ENCODE measurements at regions of chr21 and their contacts with region 1.

Region 1: DNA sequence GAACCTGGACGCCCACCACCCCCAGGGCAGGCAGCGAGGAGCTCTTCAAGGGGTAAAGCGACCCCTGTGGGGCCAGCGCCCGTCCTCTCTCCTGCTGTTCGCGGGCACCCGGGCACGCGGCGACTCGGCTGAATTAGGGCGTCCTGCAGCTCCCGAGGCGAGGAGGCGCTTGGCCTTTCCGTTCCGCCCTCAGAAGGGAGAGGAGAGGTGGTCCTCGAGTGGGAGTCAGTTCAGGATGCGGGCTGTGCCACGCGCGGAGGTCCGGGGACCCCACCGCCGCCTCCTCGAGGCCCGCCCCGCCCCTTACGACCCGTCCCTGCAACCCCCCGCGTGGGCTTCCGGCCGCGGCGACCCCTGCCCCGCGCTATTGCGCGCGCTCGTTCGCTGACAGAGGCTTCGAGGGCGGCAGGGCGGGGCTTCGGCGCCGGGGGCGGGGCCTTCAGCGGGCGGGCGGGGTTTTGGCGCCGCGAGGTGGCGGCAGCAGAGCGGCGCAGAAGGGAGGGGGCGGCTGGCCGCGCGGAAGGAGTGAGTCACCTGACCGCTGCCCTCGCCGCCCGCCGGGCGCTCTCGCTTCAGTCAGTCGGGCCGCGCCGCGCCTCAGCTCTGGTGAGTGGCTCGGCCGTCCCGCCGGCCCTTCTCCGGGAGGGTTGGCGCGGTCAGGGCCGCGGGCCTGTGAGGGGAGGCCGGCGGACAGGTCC is at the start of gene BACH1:
- DNase-seq: peak; percentile 88
- H3K4me3 Mint-ChIP-seq: peak within 1 kb of the TSS; percentile 81
- H3K27ac Mint-ChIP-seq: peak within 1 kb of the TSS; percentile 61
- H3K4me1 Mint-ChIP-seq: peaks cover 38% of the 10 kb centered on the region
- H3K27me3 Mint-ChIP-seq: no peaks in the 10 kb centered on the region
- CTCF ChIP-seq: peak; percentile 35
- total RNA-seq, gene BACH1: 69.3 and 76.6 TPM in 2 replicates

Region 2: DNA sequence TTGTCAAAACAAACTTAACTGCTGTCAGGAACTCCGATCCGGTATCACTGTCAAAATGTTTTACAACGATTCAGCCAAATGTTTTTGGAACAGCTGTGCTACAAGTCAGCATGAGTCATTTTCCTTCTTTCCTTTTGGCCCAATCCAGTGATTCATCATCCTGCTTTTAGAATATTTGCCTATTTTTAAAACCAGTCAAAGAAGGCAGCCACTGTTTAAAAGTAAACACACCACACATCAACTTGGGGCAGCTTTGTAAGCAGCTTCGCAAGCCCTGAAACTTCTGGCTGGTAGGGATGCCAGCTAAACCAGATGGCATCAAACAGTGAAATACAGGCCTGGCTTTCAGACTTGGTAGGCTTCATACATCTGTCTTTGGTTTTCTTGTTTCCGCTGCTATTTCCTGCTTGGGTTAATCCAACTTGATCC is 153.1 kb before region 1 on chr21:
- CTCF ChIA-PET with region 1: interaction called, 5 read pairs
- POLR2A ChIA-PET with region 1: interaction called, 61 read pairs
- intact Hi-C with region 1: no loop called
- DNase-seq: peak; percentile 91
- H3K4me3 Mint-ChIP-seq: peak overlapping the region; percentile 39
- H3K27ac Mint-ChIP-seq: peak overlapping the region; percentile 92
- H3K4me1 Mint-ChIP-seq: peaks cover 23% of the 10 kb centered on the region
- H3K27me3 Mint-ChIP-seq: no peaks in the 10 kb centered on the region
- CTCF ChIP-seq: no peak

Region 3: DNA sequence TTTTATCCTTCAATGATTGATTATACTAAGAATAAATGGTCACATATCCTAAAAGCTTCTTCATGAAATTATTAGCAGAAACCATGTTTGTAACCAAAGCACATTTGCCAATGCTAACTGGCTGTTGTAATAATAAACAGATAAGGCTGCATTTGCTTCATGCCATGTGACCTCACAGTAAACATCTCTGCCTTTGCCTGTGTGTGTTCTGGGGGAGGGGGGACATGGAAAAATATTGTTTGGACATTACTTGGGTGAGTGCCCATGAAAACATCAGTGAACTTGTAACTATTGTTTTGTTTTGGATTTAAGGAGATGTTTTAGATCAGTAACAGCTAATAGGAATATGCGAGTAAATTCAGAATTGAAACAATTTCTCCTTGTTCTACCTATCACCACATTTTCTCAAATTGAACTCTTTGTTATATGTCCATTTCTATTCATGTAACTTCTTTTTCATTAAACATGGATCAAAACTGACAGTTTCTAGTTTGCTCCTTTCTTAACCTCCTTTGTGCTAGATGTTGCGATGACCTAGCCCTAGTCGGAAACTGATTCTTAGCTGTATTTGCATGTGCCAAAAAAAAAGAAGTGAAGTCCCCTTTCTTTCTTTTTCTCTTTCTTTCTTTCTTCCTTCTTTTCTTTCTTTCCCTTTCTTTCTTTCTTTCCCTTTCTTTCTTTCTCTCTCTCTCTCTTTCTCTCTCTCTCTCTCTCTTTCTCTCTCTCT is 122.9 kb before region 1 on chr21:
- CTCF ChIA-PET with region 1: interaction called, 29 read pairs
- POLR2A ChIA-PET with region 1: interaction called, 58 read pairs
- intact Hi-C with region 1: no loop called
- DNase-seq: peak; percentile 65
- H3K4me3 Mint-ChIP-seq: no peak overlapping the region
- H3K27ac Mint-ChIP-seq: peak overlapping the region; percentile 84
- H3K4me1 Mint-ChIP-seq: peaks cover 13% of the 10 kb centered on the region
- H3K27me3 Mint-ChIP-seq: no peaks in the 10 kb centered on the region
- CTCF ChIP-seq: no peak

Region 4: DNA sequence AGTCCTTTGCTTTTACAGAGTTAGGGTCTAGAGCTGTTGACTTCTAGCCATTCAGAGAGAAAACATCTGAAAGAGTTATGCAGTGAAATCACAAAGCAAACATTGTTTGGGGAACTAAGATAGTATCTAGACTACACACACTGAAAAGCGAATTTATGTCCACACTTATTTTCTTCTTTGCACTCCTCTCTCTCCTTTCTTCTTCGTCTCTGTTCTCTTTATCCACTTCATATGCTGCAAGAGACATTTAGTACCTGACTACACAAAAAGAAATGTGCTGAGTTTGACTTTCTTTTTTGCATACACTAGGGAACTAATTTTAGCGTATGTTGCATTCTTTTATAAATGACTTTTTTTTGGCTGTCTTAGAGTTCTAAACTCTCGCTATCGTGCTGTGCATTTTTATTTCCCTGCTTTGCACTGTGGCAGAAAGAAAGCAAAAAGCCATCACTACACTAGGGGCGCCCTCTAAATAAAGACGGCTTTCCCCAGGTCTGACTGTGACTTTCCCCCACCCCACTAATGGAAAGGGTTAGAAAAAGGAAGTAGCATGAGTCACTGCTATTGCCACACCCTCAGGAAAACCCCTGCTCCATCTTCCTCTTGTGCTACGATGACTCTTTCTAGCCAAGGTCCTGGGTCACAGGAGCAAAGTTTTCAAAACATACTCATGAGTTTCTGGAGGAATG is 102.4 kb before region 1 on chr21:
- CTCF ChIA-PET with region 1: interaction called, 4 read pairs
- POLR2A ChIA-PET with region 1: interaction called, 126 read pairs
- intact Hi-C with region 1: no loop called
- DNase-seq: peak; percentile 94
- H3K4me3 Mint-ChIP-seq: peak overlapping the region; percentile 69
- H3K27ac Mint-ChIP-seq: peak overlapping the region; percentile 98
- H3K4me1 Mint-ChIP-seq: peaks cover 27% of the 10 kb centered on the region
- H3K27me3 Mint-ChIP-seq: no peaks in the 10 kb centered on the region
- CTCF ChIP-seq: peak; percentile 19

Region 5: DNA sequence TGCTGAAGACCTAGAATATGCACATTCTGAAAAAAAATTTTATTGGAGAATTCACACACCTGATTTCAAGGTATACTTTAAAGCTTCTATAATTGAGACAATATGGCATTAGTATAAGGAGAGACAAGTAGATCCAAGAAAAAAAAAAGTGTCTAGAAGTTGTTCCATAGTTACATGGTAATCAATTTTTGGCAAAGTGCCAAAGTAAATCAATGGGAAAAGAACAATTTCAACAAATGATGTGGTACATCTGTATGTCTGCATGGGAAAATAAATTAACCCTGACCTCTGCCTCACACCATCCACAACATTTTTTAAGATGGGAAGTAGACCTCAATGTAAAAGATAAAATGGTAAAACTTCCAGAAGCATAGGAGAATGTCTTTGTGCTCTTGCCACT is 21.1 kb before region 1 on chr21:
- CTCF ChIA-PET with region 1: interaction called, 4 read pairs
- POLR2A ChIA-PET with region 1: interaction called, 20 read pairs
- intact Hi-C with region 1: no loop called
- DNase-seq: no peak
- H3K4me3 Mint-ChIP-seq: no peak overlapping the region
- H3K27ac Mint-ChIP-seq: no peak overlapping the region
- H3K4me1 Mint-ChIP-seq: no peaks in the 10 kb centered on the region
- H3K27me3 Mint-ChIP-seq: no peaks in the 10 kb centered on the region
- CTCF ChIP-seq: no peak

Region 6: GRCh38 chr21:29334712-29335428 is 36.4 kb after region 1 on chr21:
- CTCF ChIA-PET with region 1: interaction called, 5 read pairs
- POLR2A ChIA-PET with region 1: interaction called, 57 read pairs
- intact Hi-C with region 1: no loop called
- DNase-seq: peak; percentile 76
- H3K4me3 Mint-ChIP-seq: no peak overlapping the region
- H3K27ac Mint-ChIP-seq: no peak overlapping the region
- H3K4me1 Mint-ChIP-seq: peaks cover 22% of the 10 kb centered on the region
- H3K27me3 Mint-ChIP-seq: no peaks in the 10 kb centered on the region
- CTCF ChIP-seq: no peak

Region 7: DNA sequence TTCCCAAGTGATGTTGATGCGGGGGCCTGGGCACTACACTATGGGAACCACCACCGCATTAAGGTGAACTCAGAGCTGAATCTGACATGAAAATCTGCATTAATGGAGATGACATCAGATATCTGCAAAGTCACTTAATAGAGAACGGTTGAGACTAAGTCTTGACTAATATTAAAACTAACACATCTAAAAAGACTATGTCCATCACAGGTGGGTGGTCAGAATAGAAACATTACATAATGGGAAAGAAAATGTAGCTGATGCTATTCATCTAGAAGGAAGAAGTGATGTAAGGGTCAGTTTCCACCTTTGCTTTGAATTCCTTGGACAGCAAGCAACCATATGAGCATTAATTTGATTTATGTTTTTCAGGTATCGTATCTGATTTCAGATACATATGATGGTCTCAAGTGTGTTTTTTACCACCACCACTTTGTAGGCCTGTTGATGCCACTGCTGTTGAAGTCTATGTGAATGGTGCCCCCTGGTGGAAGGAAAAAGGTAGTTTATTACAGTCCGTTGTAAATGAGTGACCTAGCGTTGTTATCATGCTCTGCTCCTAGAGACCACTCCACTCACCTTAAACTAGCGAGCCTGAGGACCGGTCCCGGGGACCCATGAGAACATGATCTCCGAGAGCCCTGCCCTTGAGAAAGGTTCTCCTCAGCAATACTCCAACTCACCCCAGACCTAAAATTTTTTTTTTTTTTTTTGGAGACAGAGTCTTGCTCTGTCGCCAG is 73.7 kb after region 1 on chr21:
- CTCF ChIA-PET with region 1: interaction called, 30 read pairs
- POLR2A ChIA-PET with region 1: interaction called, 5 read pairs
- intact Hi-C with region 1: loop called (anchors 1 kb)
- DNase-seq: peak; percentile 86
- H3K4me3 Mint-ChIP-seq: no peak overlapping the region
- H3K27ac Mint-ChIP-seq: no peak overlapping the region
- H3K4me1 Mint-ChIP-seq: peaks cover 3% of the 10 kb centered on the region
- H3K27me3 Mint-ChIP-seq: no peaks in the 10 kb centered on the region
- CTCF ChIP-seq: peak; percentile 69

Region 8: DNA sequence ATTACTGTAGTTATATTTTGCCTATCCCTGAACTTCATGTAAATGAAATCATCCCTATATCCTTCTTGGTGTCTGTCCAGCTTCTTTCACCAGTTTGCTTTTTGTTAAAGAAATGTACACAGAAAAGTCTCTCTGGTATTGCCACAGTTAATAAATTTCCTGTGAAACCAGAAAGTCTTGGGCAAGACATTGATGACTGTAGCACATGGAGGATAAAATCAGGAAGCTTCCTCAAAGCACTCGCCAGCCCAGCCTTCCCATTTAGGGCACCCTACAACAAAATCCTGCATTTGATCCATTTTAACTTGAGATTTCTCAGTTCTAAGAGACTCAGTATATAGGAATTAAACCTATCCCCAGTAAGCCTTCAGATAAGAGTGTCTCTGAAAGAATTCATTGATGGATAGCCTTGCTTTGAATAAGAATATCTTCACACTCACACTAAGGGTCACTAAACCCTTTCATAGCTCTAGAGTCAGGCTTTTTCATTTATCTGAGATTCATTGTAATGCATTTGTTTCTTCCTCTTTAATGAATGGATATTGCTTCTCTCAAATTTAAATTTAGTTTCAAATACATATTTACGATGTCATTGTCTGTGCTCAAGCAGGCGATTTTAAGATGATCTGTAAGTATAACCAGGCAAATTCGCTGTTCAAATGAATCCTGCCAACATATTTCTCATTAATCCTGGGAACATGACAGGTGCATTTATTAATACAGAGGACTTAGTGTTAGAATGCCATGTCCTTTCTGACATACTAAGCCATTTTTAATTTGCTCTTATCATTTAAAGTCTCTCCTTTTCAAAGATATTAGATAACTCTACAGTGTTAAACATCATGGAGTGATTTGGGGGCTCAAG is 488.2 kb after region 1 on chr21:
- CTCF ChIA-PET with region 1: no interaction called
- POLR2A ChIA-PET with region 1: no interaction called
- intact Hi-C with region 1: no loop called
- DNase-seq: no peak
- H3K4me3 Mint-ChIP-seq: no peak overlapping the region
- H3K27ac Mint-ChIP-seq: no peak overlapping the region
- H3K4me1 Mint-ChIP-seq: no peaks in the 10 kb centered on the region
- H3K27me3 Mint-ChIP-seq: peaks cover 32% of the 10 kb centered on the region
- CTCF ChIP-seq: no peak

Region 9: DNA sequence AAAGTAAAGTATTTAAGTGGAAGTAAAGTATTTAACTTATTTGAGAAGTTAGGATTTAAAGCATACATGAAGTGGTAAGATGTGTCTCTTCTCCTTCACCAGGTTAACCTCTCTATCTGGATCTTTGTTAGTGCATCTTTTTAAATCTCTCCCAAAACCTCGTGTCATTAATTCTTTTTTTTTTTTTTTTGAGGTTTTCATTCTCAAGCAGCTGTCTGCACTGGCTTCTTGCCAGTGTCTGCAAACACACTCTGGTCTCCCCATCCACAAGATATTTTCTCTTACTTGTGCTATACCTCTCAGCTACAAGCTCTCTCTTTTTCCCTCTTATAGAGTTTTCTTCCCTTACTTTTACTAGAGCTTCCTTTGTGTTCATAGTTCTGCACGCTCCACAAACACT is 819.1 kb after region 1 on chr21:
- CTCF ChIA-PET with region 1: no interaction called
- POLR2A ChIA-PET with region 1: no interaction called
- intact Hi-C with region 1: no loop called
- DNase-seq: no peak
- H3K4me3 Mint-ChIP-seq: no peak overlapping the region
- H3K27ac Mint-ChIP-seq: no peak overlapping the region
- H3K4me1 Mint-ChIP-seq: no peaks in the 10 kb centered on the region
- H3K27me3 Mint-ChIP-seq: no peaks in the 10 kb centered on the region
- CTCF ChIP-seq: no peak